Lower lobe of right lung (tissue), 2 donors: ENCODE measurements at regions of chr3 and their contacts with region 1.

Region 1: DNA sequence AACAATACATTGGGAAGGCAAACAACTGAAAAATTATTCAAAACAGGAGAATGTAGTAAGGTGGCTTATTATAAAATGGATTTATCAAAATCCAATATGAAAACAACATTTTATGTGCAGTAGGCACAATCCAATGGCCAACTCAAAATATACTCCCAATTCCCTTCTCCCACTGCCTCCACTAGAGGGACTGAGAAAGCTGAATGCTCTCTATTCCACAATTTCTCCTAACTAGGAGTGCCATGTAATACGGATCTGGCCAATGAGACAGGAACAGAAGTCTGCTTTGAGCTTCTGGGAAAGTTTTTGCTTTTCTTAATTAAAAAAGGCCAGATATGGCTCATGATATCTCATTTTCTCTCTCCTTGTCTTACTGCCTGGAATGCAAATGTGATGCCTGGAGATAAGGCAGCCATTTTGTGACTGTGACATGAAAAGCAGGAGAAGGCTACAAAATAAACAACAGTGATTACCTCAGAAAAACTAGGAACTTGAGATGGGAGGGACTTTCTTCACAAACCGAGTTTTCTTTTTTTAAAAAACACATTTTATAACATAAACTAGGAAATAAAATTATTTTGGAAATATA is 18.8 kb upstream of the VGLL4 start:
- DNase-seq: no peak
- ATAC-seq: no peak
- H3K4me3 ChIP-seq: no peak overlapping the region
- H3K27ac ChIP-seq: no peak overlapping the region
- H3K4me1 ChIP-seq: peaks cover 16% of the 10 kb centered on the region
- H3K27me3 ChIP-seq: no peaks in the 10 kb centered on the region
- CTCF ChIP-seq: no peak

Region 2: GRCh38 chr3:11370191-11370590 is 292.3 kb before region 1 on chr3:
- intact Hi-C with region 1: loop called (anchors 5 kb)
- DNase-seq: no peak
- ATAC-seq: no peak
- H3K4me3 ChIP-seq: no peak overlapping the region
- H3K27ac ChIP-seq: no peak overlapping the region
- H3K4me1 ChIP-seq: peaks cover 35% of the 10 kb centered on the region
- H3K27me3 ChIP-seq: no peaks in the 10 kb centered on the region
- CTCF ChIP-seq: no peak